Dendritic cell treated with granulocyte-macrophage colony-stimulating factor and Interleukin-4, amounts not matched to agents 40 ng/mL and 50 ng/mL, for 4 days (primary cell): ENCODE measurements at regions of chr20 and their contacts with region 1.

Region 1: GRCh38 chr20:35742741-35743523 is 872 bp upstream of the RBM39 start:
- H3K4me3 Mint-ChIP-seq: peak overlapping the region; percentile 91
- H3K27ac Mint-ChIP-seq: peak overlapping the region; percentile 100
- H3K4me1 Mint-ChIP-seq: peaks cover 34% of the 10 kb centered on the region
- H3K27me3 Mint-ChIP-seq: no peaks in the 10 kb centered on the region

Region 2: DNA sequence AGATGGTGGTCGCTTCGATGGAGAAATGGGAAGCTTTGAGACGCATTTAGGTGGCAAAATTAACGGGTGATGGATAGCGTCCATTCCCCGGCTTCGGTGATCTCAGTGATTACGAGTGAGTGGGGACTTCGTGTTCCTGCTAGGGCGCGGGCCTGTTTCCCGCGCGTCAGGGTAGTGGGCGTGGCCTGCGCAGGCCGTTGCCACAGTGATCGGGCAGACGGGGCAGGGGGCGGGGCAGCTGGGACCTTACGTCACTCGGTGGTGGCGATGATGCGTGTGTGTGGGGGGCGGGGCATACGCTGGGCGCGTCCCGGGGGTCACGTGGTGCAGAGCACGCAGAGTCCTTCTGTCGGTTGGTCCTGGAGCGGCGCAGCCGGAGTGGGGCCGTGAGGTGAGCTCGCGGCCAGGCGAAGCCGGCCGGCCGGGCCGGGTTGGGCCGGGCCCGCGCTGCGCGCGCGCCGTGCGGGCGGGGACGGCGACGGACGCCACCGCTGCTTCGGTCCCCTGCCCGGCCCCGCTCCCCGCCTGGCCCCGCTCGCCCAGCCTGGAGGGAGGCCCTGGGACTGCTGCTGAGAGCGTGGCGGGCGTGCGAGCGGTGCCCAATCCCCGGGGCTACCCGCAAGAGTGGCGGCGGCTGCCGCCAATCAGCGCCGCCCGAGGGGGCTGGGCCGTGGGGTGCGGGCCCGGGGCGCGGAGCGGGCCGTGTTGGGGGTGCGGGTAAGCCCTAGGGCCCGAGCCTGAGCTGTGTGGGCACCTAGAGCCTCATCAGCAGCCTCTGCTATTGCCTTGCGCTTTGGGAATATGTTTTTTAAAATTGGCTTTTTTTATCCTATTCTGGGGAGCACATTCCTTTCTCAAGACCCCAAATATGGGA is 29.0 kb after region 1 on chr20 and contains the start of gene PHF20:
- intact Hi-C with region 1: loop called (anchors 1 kb)
- H3K4me3 Mint-ChIP-seq: peak within 1 kb of the TSS; percentile 76
- H3K27ac Mint-ChIP-seq: peak within 1 kb of the TSS; percentile 92
- H3K4me1 Mint-ChIP-seq: peaks cover 61% of the 10 kb centered on the region
- H3K27me3 Mint-ChIP-seq: no peaks in the 10 kb centered on the region

Region 3: DNA sequence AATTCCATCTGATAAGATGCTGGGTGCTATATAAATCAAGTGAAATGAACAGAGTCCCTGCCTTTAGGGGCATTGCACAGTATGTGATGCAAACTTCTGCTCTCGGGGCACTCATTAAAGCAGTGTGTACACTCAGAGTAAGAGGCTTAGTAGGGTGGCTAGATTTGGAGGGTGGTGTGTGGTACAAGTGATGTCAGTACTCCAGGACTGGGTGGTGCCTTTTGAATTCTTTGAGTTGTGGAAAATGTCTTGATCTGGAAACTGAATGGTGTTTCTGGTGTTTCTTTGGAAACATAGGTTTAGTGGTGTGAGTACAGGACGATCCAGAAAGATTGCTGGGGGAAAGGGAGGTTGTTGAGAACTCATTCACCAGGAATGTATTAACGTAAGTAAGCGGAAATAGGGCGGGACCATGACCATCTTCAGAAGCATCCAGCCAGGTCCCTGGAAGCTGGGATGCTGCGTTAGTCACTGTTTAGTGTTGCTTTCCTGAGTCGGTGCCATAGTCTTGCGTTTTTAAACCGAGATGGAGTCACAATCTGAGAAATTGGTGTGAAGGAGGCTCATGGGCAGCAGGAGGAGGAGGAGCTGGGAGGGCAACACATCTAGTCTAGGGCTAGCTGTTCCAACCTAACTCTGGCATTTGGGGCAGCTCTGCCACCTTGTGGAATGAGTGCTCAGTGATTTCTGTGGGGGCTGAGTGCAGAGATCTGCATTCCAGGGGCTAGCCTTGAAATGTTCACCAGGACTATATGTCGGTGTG is 141.0 kb after region 1 on chr20:
- intact Hi-C with region 1: loop called (anchors 10 kb)
- H3K4me3 Mint-ChIP-seq: no peak overlapping the region
- H3K27ac Mint-ChIP-seq: no peak overlapping the region
- H3K4me1 Mint-ChIP-seq: peaks cover 18% of the 10 kb centered on the region
- H3K27me3 Mint-ChIP-seq: no peaks in the 10 kb centered on the region

Region 4: DNA sequence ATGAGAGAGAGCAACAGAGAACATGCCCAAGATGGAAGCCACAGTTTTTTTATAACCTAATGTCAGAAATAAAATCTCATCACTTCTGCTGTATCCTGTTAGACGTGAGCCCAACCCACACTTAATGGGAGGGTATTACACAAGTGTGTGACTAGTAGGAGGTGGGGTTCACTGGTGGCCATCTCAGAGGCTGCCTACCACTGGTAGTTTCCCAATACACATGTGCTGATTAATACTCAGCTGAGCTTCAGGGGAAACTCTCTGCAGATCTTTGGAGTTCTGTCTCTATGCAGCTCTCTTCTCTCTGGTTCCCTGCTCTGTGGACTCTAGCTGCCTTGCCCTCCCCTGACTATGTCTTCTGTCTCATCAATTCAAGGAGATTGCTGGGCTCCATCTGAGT is 261.1 kb after region 1 on chr20:
- intact Hi-C with region 1: no loop called
- H3K4me3 Mint-ChIP-seq: no peak overlapping the region
- H3K27ac Mint-ChIP-seq: no peak overlapping the region
- H3K4me1 Mint-ChIP-seq: peaks cover 7% of the 10 kb centered on the region
- H3K27me3 Mint-ChIP-seq: peaks cover 7% of the 10 kb centered on the region